Natural killer cell (primary cell): ENCODE measurements at regions of chr1 and their contacts with region 1.

Region 1: DNA sequence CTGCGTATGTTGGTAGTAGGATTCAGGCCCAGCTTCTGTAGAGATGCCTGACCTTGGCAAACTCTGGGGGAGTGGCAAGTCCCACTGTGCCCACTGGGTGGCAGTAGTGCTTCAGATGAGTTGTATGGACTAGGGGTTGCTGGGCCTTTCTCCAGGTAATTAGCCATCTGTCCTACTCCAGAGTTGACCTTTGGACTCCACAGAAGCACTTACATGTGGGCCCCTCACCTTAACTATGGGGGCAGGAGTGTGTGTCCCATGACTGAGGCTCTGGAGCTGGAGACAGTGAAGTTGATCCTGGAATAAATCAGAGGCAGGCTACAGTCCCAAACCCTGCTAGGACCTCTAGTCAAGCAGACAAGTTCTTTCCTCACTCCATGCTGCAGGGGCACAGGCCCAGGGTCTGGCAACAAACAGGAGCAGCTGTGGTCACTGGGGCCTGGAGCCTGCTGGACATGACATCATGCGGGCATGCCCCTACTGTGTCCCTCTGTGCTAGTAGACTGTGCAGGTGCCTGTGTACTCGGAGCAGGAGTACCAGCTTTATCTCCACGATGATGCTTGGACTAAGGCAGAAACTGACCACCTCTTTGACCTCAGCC is 4.6 kb downstream of the DMAP1 start:
- DNase-seq: peak; percentile 60 to 81
- ATAC-seq: peak; percentile 45 to 65 (median 57)
- H3K4me3 ChIP-seq: no peak overlapping the region
- H3K4me3 Mint-ChIP-seq: no peak overlapping the region
- H3K27ac ChIP-seq: no peak overlapping the region
- H3K27ac Mint-ChIP-seq: no peak overlapping the region
- H3K4me1 ChIP-seq: peaks cover 17% of the 10 kb centered on the region
- H3K4me1 Mint-ChIP-seq: peaks cover 30 to 44% of the 10 kb centered on the region in 2 donors
- H3K27me3 ChIP-seq: no peaks in the 10 kb centered on the region
- H3K27me3 Mint-ChIP-seq: no peaks in the 10 kb centered on the region
- CTCF ChIP-seq: peak; percentile 86

Region 2: DNA sequence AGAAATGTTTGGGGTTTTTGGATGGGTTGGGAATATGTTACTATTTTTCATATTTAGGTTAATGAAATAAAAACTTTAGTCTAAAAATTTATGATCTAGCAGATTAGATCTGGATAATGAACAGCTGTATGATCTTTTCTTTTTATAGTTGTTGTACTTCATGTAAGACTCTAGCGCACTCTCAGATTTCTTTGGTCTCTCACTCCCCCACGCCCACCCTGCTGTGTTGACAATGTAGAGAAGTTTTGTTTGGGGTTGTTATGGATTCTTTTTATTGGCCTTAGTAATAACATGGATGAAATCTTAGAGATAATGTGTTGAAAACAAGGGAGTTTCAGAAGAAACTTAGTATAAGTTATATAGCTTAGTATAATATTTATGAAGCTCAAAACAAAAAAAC is 82.0 kb before region 1 on chr1:
- intact Hi-C with region 1: no loop called
- DNase-seq: no peak
- ATAC-seq: no peak
- H3K4me3 ChIP-seq: no peak overlapping the region
- H3K4me3 Mint-ChIP-seq: no peak overlapping the region
- H3K27ac ChIP-seq: no peak overlapping the region
- H3K27ac Mint-ChIP-seq: no peak overlapping the region
- H3K4me1 ChIP-seq: no peaks in the 10 kb centered on the region
- H3K4me1 Mint-ChIP-seq: no peaks in the 10 kb centered on the region
- H3K27me3 ChIP-seq: no peaks in the 10 kb centered on the region
- H3K27me3 Mint-ChIP-seq: peaks cover 3 to 10% of the 10 kb centered on the region in 2 donors
- CTCF ChIP-seq: no peak

Region 3: DNA sequence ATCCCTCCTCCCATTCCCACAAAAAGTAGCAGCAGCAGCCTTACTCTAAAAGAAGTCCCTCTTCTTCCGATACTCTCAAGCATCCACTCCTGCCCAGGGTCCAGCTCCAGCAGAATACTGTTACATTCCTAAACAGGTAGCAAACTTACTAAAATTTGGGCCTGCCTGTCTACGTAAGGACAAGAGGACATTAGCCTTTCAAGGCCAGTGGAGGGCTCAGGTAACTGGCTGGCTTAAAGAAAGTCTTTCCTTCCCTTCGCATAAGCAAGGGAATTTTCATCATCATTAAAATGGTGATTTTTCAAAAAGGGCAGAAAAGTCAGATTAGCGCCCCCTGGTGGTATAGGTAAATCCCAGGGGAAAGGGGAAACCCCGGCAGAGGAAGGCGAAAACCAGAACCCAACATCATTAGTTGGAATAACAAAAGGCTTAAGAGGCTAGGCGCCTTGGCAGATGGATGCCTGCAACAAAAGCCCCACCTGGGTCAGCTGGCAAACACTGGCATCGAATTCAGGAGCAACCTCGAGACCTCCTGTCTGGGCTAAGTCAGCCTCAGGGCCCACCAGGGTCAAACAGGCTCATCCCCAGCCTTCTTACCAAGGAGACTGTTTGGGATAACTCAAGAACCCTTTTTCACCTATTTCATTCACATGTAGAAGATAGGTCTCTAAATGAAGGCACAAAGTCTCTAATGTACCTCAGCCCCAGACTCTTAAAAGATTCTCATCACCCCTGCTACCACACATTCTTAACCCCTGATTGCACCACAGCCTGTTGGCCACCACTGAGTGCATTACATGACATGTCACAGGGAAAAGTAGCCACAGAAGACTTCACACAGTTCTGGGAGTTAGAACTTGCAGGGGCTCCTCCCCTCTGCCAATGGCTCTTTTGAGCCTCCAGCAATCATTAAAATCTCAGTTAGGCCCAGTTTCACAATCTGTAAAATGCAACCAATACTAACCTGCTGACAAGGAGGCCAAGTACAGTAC is 100.5 kb after region 1 on chr1:
- intact Hi-C with region 1: loop called (anchors 2 kb)
- DNase-seq: peak in 1 of 2 donors; percentile 77
- ATAC-seq: peak in 1 of 3 donors; percentile 52
- H3K4me3 ChIP-seq: no peak overlapping the region
- H3K4me3 Mint-ChIP-seq: no peak overlapping the region
- H3K27ac ChIP-seq: no peak overlapping the region
- H3K27ac Mint-ChIP-seq: peak overlapping the region in 1 of 2 donors; percentile 59
- H3K4me1 ChIP-seq: peaks cover 2% of the 10 kb centered on the region
- H3K4me1 Mint-ChIP-seq: peaks cover 4 to 8% of the 10 kb centered on the region in 2 donors
- H3K27me3 ChIP-seq: no peaks in the 10 kb centered on the region
- H3K27me3 Mint-ChIP-seq: no peaks in the 10 kb centered on the region
- CTCF ChIP-seq: peak; percentile 89

Region 4: GRCh38 chr1:44594871-44595746 is 377.2 kb after region 1 on chr1:
- intact Hi-C with region 1: loop called (anchors 1 kb)
- DNase-seq: peak; percentile 78 to 86
- ATAC-seq: peak; percentile 88 to 99 (median 98)
- H3K4me3 ChIP-seq: no peak overlapping the region
- H3K4me3 Mint-ChIP-seq: no peak overlapping the region
- H3K27ac ChIP-seq: no peak overlapping the region
- H3K27ac Mint-ChIP-seq: peak overlapping the region in 1 of 2 donors; percentile 54
- H3K4me1 ChIP-seq: peaks cover 3% of the 10 kb centered on the region
- H3K4me1 Mint-ChIP-seq: peaks cover 0 to 8% of the 10 kb centered on the region in 2 donors
- H3K27me3 ChIP-seq: no peaks in the 10 kb centered on the region
- H3K27me3 Mint-ChIP-seq: peaks cover 0 to 3% of the 10 kb centered on the region in 2 donors
- CTCF ChIP-seq: peak; percentile 97

Region 5: DNA sequence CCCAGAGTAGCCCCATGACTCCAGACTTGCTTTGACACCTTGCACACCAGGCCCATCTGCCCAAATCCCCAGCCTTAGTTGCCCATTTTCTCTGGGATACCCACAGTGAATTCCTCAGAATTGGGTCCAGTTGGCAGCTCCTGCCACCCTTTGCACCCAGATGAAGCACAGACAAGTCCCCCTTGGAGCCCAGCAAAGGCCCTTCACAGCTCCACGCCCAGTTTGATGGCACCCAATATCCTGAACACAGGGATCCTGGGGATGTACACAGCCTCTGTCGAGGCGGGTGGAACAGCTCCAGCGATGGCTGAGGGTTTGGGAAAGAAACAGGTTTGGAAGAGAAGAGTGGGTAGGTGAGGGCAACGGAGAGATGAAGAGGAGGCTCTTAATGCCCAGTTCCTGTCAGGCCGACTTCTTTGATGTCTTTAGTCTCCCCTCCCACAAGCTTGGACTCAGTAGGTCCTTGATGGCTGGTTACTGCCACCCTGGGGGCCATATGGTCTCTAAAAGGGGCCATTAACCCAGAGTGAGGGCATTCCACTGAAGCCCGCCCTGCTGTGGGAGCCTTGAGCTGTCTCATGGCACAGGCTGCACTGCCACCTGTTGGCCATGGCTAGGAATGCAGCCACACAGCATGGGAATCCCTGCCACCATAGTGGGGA is 434.7 kb after region 1 on chr1:
- intact Hi-C with region 1: loop called (anchors 2 kb)
- DNase-seq: peak; percentile 71 to 87
- ATAC-seq: peak; percentile 91 to 99 (median 97)
- H3K4me3 ChIP-seq: no peak overlapping the region
- H3K4me3 Mint-ChIP-seq: no peak overlapping the region
- H3K27ac ChIP-seq: no peak overlapping the region
- H3K27ac Mint-ChIP-seq: peak overlapping the region; percentile 2 to 29
- H3K4me1 ChIP-seq: peaks cover 2% of the 10 kb centered on the region
- H3K4me1 Mint-ChIP-seq: peaks cover 0 to 5% of the 10 kb centered on the region in 2 donors
- H3K27me3 ChIP-seq: no peaks in the 10 kb centered on the region
- H3K27me3 Mint-ChIP-seq: no peaks in the 10 kb centered on the region
- CTCF ChIP-seq: peak; percentile 92